ENCODE measurements at regions of chr1 and their contacts with region 1.

Region 1: GRCh38 chr1:109984456-109985275 is at the start of gene AHCYL1:
- DNase-seq: peak; percentile 97 to 100 (median 99)
- ATAC-seq: peak; percentile 95 to 97 (median 97)
- H3K4me3 ChIP-seq: peak within 1 kb of the TSS; percentile 65 to 93 (median 89)
- H3K27ac ChIP-seq: peak within 1 kb of the TSS; percentile 91 to 98 (median 95)
- H3K4me1 ChIP-seq: peaks cover 11 to 42% (median 28%) of the 10 kb centered on the region in 3 donors
- H3K27me3 ChIP-seq: no peaks in the 10 kb centered on the region
- CTCF ChIP-seq: peak; percentile 96 to 99 (median 98)
- total RNA-seq, gene AHCYL1: 44.5 to 85.5 (median 50.1) TPM

Region 2: GRCh38 chr1:109548321-109549267 is 436.1 kb before region 1 on chr1 and contains the start of gene GNAI3:
- intact Hi-C with region 1: loop called in 1 of 3 experiments (anchors 10 kb)
- DNase-seq: peak; percentile 91 to 96 (median 94)
- ATAC-seq: peak; percentile 94 to 97 (median 95)
- H3K4me3 ChIP-seq: peak within 1 kb of the TSS; percentile 43 to 93 (median 80)
- H3K27ac ChIP-seq: peak within 1 kb of the TSS; percentile 66 to 99 (median 88)
- H3K4me1 ChIP-seq: peaks cover 0 to 41% (median 8%) of the 10 kb centered on the region in 3 donors
- H3K27me3 ChIP-seq: no peaks in the 10 kb centered on the region
- CTCF ChIP-seq: no peak
- total RNA-seq, gene GNAI3: 2.5 to 3.9 (median 3.1) TPM

Region 3: DNA sequence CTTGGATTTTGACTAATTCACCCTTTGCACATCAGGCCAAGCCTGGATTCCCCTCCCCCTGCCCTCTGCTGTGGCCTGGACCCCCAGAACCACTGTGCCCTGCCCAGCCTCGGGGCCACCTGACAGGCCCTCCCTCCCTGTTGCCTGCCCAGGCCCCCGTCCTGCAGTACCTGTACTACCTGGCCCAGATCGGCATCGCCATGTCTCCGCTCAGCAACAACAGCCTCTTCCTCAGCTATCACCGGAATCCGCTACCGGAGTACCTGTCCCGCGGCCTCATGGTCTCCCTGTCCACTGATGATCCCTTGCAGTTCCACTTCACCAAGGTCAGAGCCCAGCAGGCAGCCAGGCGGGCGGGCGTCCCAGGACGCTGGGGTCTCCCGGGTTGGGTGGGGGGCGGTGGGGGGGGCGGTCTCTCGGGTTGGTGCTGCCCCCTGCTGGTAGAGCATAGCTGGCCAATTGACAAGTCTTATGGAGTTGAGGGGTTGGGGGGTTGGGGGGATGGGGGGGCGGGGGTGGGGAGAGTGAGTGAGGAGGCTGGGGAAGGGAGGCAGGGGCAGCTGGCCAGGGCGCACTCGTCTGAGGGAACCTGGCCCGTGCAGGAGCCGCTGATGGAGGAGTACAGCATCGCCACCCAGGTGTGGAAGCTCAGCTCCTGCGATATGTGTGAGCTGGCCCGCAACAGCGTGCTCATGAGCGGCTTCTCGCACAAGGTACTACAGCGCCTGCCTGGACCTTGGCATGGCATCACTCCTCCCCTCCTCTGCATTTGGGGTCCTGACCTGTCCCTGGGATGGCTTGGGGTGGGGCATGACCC is 354.4 kb before region 1 on chr1:
- intact Hi-C with region 1: loop called in 2 of 3 experiments (anchors 5 to 10 kb)
- DNase-seq: peak in 3 of 6 donors; percentile 19 to 72 (median 45)
- ATAC-seq: peak in 2 of 4 donors; percentile 37 to 44
- H3K4me3 ChIP-seq: no peak overlapping the region
- H3K27ac ChIP-seq: no peak overlapping the region
- H3K4me1 ChIP-seq: no peaks in the 10 kb centered on the region
- H3K27me3 ChIP-seq: no peaks in the 10 kb centered on the region
- CTCF ChIP-seq: peak in 1 of 4 donors; percentile 8

Region 4: GRCh38 chr1:109636201-109636952 is 348.3 kb before region 1 on chr1:
- intact Hi-C with region 1: loop called in 2 of 3 experiments (anchors 5 to 10 kb)
- DNase-seq: peak in 1 of 6 donors; percentile 6
- ATAC-seq: peak in 2 of 4 donors; percentile 16 to 27
- H3K4me3 ChIP-seq: no peak overlapping the region
- H3K27ac ChIP-seq: no peak overlapping the region
- H3K4me1 ChIP-seq: no peaks in the 10 kb centered on the region
- H3K27me3 ChIP-seq: no peaks in the 10 kb centered on the region
- CTCF ChIP-seq: no peak

Region 5: GRCh38 chr1:109923131-109923945 is 61.3 kb before region 1 on chr1:
- intact Hi-C with region 1: no loop called
- DNase-seq: peak in 1 of 6 donors; percentile 9
- ATAC-seq: peak in 3 of 4 donors; percentile 29 to 54 (median 43)
- H3K4me3 ChIP-seq: no peak overlapping the region
- H3K27ac ChIP-seq: no peak overlapping the region
- H3K4me1 ChIP-seq: peaks cover 0 to 8% (median 0%) of the 10 kb centered on the region in 3 donors
- H3K27me3 ChIP-seq: no peaks in the 10 kb centered on the region
- CTCF ChIP-seq: peak in 3 of 4 donors; percentile 14 to 31 (median 22)

Region 6: GRCh38 chr1:110292031-110292741 is 307.5 kb after region 1 on chr1:
- intact Hi-C with region 1: no loop called
- DNase-seq: no peak
- ATAC-seq: peak in 1 of 4 donors; percentile 56
- H3K4me3 ChIP-seq: no peak overlapping the region
- H3K27ac ChIP-seq: no peak overlapping the region
- H3K4me1 ChIP-seq: no peaks in the 10 kb centered on the region
- H3K27me3 ChIP-seq: no peaks in the 10 kb centered on the region
- CTCF ChIP-seq: no peak

Region 7: GRCh38 chr1:110407260-110408210 is 422.9 kb after region 1 on chr1 and contains the start of gene LAMTOR5:
- intact Hi-C with region 1: no loop called
- DNase-seq: peak; percentile 85 to 95 (median 93)
- ATAC-seq: peak; percentile 98
- H3K4me3 ChIP-seq: peak within 1 kb of the TSS; percentile 65 to 97 (median 81)
- H3K27ac ChIP-seq: peak within 1 kb of the TSS; percentile 62 to 93 (median 80)
- H3K4me1 ChIP-seq: peaks cover 9 to 12% (median 12%) of the 10 kb centered on the region in 3 donors
- H3K27me3 ChIP-seq: no peaks in the 10 kb centered on the region
- CTCF ChIP-seq: no peak
- total RNA-seq, gene LAMTOR5: 29.0 to 63.9 (median 36.8) TPM